H1 (cell line): ENCODE measurements at regions of chr15 and their contacts with region 1.

Region 1: GRCh38 chr15:92797168-92797951 is 102.8 kb upstream of the CHD2 start:
- DNase-seq: no peak
- H3K4me3 ChIP-seq: no peak overlapping the region
- H3K27ac ChIP-seq: no peak overlapping the region
- H3K4me1 ChIP-seq: no peaks in the 10 kb centered on the region; a peak in 1 of 7 replicates
- H3K27me3 ChIP-seq: no peaks in the 10 kb centered on the region
- CTCF ChIP-seq: peak in 2 of 3 experiments; percentile 39 to 69; a peak in 2 of 4 replicates
- EP300 ChIP-seq: no peak
- POLR2A ChIP-seq: no peak
- RAD21 ChIP-seq: peak; percentile 59 to 62

Region 2: DNA sequence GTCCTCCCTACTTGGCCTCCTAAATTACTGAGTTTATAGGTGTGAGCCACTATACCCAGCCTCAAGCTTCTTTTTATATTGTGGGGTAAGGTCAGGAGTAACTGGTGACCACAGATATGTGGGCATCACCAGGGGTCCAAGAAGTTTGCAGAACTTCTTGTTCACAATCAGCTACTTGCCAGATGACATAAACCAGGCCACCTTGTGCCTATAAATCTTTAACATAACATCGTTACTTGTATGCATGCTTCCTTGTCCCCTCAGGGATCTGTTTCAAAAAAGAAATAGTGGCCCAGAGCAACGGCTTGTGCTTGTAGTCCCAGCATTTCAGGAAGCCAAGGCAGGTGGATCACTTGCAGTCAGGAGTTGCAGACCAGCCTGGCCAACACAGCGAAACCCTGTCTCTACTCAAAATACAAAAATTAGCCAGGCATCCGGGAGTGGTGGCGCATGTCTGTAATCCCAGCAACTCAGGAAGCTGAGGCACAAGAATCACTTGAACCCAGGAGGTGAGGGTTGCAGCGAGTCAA is 26.7 kb before region 1 on chr15:
- CTCF ChIA-PET with region 1: interaction called, 11 read pairs
- POLR2A ChIA-PET with region 1: interaction called, 3 read pairs
- DNase-seq: no peak
- H3K4me3 ChIP-seq: no peak overlapping the region
- H3K27ac ChIP-seq: no peak overlapping the region
- H3K4me1 ChIP-seq: no peaks in the 10 kb centered on the region
- H3K27me3 ChIP-seq: no peaks in the 10 kb centered on the region
- CTCF ChIP-seq: no peak
- EP300 ChIP-seq: no peak
- POLR2A ChIP-seq: no peak
- RAD21 ChIP-seq: no peak

Region 3: GRCh38 chr15:92808978-92809879 is 11.9 kb after region 1 on chr15:
- CTCF ChIA-PET with region 1: interaction called, 54 read pairs
- POLR2A ChIA-PET with region 1: interaction called, 8 read pairs
- DNase-seq: peak; percentile 97 to 99
- H3K4me3 ChIP-seq: peak overlapping the region; percentile 45 to 75 (median 63)
- H3K27ac ChIP-seq: peak overlapping the region; percentile 99
- H3K4me1 ChIP-seq: peaks cover 11 to 16% (median 12%) of the 10 kb centered on the region in 4 experiments; a peak in 6 of 7 replicates
- H3K27me3 ChIP-seq: no peaks in the 10 kb centered on the region
- CTCF ChIP-seq: peak; percentile 84 to 93 (median 92)
- EP300 ChIP-seq: peak in 1 of 2 experiments; percentile 93; a peak in 2 of 3 replicates
- POLR2A ChIP-seq: peak in 1 of 2 experiments; percentile 96; a peak in 2 of 3 replicates
- RAD21 ChIP-seq: peak; percentile 71 to 81

Region 4: GRCh38 chr15:92881802-92882696 is 84.7 kb after region 1 on chr15:
- CTCF ChIA-PET with region 1: interaction called, 12 read pairs
- POLR2A ChIA-PET with region 1: interaction called, 3 read pairs
- DNase-seq: peak; percentile 98 to 100
- H3K4me3 ChIP-seq: peak overlapping the region in 3 of 4 experiments; percentile 21 to 100 (median 94); a peak in 6 of 8 replicates
- H3K27ac ChIP-seq: peak overlapping the region; percentile 80
- H3K4me1 ChIP-seq: peaks cover 9 to 20% (median 17%) of the 10 kb centered on the region in 4 experiments; a peak in 5 of 7 replicates
- H3K27me3 ChIP-seq: no peaks in the 10 kb centered on the region
- CTCF ChIP-seq: no peak
- EP300 ChIP-seq: no peak
- POLR2A ChIP-seq: peak; percentile 75 to 96
- RAD21 ChIP-seq: 0 out of 4 replicates have a peak, but pooled peaks have one; percentile 1 to 2

Region 5: GRCh38 chr15:92917606-92918407 is 120.4 kb after region 1 on chr15:
- CTCF ChIA-PET with region 1: interaction called, 80 read pairs
- POLR2A ChIA-PET with region 1: interaction called, 6 read pairs
- DNase-seq: peak; percentile 80 to 96
- H3K4me3 ChIP-seq: no peak overlapping the region
- H3K27ac ChIP-seq: peak overlapping the region; percentile 67
- H3K4me1 ChIP-seq: peaks cover 0 to 14% (median 8%) of the 10 kb centered on the region in 4 experiments; a peak in 5 of 7 replicates
- H3K27me3 ChIP-seq: no peaks in the 10 kb centered on the region
- CTCF ChIP-seq: peak; percentile 44 to 82 (median 81)
- EP300 ChIP-seq: peak in 1 of 2 experiments; percentile 54; a peak in 1 of 3 replicates
- POLR2A ChIP-seq: no peak
- RAD21 ChIP-seq: peak; percentile 81 to 87

Region 6: GRCh38 chr15:93030430-93031105 is 233.2 kb after region 1 on chr15:
- CTCF ChIA-PET with region 1: interaction called, 17 read pairs
- POLR2A ChIA-PET with region 1: no interaction called
- DNase-seq: peak; percentile 56 to 90
- H3K4me3 ChIP-seq: no peak overlapping the region
- H3K27ac ChIP-seq: no peak overlapping the region
- H3K4me1 ChIP-seq: peaks cover 0 to 3% (median 0%) of the 10 kb centered on the region in 4 experiments; a peak in 3 of 7 replicates
- H3K27me3 ChIP-seq: no peaks in the 10 kb centered on the region
- CTCF ChIP-seq: peak; percentile 84 to 91 (median 85)
- EP300 ChIP-seq: no peak
- POLR2A ChIP-seq: no peak
- RAD21 ChIP-seq: peak; percentile 97

Region 7: GRCh38 chr15:93210995-93211394 is 413.6 kb after region 1 on chr15:
- CTCF ChIA-PET with region 1: no interaction called
- POLR2A ChIA-PET with region 1: no interaction called
- DNase-seq: peak in 1 of 2 experiments; percentile 34
- H3K4me3 ChIP-seq: no peak overlapping the region
- H3K27ac ChIP-seq: no peak overlapping the region
- H3K4me1 ChIP-seq: peaks cover 0 to 3% (median 0%) of the 10 kb centered on the region in 4 experiments; a peak in 2 of 7 replicates
- H3K27me3 ChIP-seq: no peaks in the 10 kb centered on the region
- CTCF ChIP-seq: no peak
- EP300 ChIP-seq: no peak
- POLR2A ChIP-seq: no peak
- RAD21 ChIP-seq: no peak